ENCODE measurements at regions of chr20 and their contacts with region 1.

Region 1: GRCh38 chr20:35447082-35447789 is 8.2 kb upstream of the CEP250 start:
- DNase-seq: peak; percentile 94

Region 2: DNA sequence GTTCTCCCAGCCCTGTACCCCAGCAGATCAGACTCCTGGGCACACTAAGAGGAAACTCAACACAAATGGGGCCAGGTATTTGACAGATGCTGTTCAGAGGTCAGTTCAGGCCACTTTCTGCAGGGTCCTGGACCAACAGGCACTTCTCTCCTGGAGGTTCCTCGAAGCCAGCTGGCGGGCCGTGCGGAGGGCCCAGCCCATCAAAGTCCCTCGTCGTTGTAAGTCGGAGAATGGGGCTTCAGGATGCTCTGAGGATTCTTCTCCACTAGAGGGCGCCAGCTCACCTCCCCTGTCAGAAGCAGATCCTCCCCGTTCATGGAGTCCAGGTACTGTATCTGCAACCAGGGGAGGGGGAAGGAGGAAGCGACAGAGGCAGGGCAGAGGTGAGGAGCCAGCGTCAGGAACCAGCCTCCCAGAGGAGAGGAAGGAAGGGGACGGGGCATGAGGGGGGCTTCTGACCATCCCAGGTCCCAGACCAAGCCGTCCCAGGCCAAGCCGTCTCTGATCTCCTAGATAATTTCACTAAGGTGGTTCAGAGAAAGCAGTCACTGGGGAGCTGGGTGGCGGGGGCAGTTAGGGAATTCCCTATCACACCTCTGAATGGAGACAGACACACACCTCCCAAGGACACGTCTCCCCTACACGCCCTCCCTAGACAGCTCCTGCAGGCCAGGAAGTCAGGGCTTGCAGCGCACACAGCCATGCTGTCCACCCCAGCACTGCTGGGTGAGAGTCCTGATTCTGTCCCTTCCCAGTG is 143.3 kb before region 1 on chr20:
- intact Hi-C with region 1: loop called (anchors 2 to 5 kb)
- DNase-seq: peak; percentile 90

Region 3: DNA sequence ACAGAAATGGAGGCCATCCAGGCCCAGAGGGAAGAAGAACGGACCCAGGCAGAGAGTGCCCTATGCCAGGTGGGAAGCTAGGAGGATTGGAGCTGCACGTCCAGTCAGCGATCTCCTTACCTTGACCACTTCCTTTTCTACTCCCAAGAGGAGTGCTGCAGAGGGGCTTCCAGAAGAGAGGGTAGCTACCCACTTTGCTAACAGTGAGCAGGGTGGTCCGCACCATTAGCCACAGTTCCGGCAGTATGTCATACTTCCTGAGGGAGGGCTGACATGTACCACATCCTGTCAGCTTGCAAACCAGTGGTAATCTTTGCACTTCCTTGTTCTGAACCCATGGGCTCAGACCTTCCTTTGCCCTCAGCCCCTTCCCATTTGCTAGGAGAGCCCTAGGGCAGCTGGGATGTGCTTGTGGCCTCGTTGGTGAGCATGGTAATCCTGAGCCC is 43.5 kb after region 1 on chr20:
- intact Hi-C with region 1: no loop called
- DNase-seq: no peak

Measured in posterior vena cava (tissue), 2 donors.